ENCODE measurements at regions of chr11 and their contacts with region 1.

Region 1: GRCh38 chr11:119067371-119068222 is at the start of gene VPS11:
- DNase-seq: peak; percentile 94
- ATAC-seq: peak; percentile 97
- H3K4me3 Mint-ChIP-seq: peak within 1 kb of the TSS; percentile 98
- H3K27ac Mint-ChIP-seq: peak within 1 kb of the TSS; percentile 98
- H3K4me1 Mint-ChIP-seq: peaks cover 34% of the 10 kb centered on the region
- H3K27me3 Mint-ChIP-seq: no peaks in the 10 kb centered on the region
- CTCF ChIP-seq: no peak
- total RNA-seq, gene VPS11: 49.6 and 53.6 TPM in 2 replicates

Region 2: DNA sequence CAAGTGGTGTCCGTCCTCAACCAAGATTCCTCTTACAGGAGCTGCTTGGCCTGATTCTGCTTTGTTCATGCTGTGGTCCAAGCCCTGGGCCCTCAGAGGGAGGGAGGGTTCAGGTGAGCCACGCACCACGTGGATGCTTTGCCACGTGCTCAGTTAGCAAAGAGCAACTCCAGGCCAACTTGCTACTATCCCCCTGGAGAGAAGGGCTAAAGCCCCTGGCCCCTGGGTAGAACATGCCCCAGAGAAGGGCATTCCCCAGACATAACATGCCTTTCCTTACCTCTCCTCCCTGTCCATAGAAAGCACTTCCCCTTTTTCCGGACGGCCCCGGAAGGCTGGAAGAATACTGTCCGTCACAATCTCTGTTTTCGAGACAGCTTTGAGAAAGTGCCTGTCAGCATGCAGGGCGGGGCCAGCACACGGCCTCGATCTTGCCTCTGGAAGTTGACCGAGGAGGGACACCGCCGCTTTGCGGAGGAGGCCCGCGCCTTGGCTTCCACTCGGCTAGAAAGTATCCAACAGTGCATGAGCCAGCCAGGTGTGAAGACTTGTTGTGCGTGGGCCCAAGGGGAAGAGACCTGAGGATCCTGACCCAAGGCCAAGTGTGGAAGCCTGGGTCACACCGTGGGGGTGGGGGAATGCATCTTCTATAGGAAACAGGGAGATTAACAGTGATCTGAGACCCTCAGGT is 87.3 kb before region 1 on chr11:
- CTCF ChIA-PET with region 1: no interaction called
- POLR2A ChIA-PET with region 1: no interaction called
- intact Hi-C with region 1: no loop called
- DNase-seq: no peak
- ATAC-seq: no peak
- H3K4me3 Mint-ChIP-seq: no peak overlapping the region
- H3K27ac Mint-ChIP-seq: no peak overlapping the region
- H3K4me1 Mint-ChIP-seq: no peaks in the 10 kb centered on the region
- H3K27me3 Mint-ChIP-seq: peaks cover 15% of the 10 kb centered on the region
- CTCF ChIP-seq: no peak

Region 3: GRCh38 chr11:118997627-118998387 is 69.8 kb before region 1 on chr11 and contains the start of gene CENATAC:
- CTCF ChIA-PET with region 1: no interaction called
- POLR2A ChIA-PET with region 1: interaction called, 17 read pairs
- intact Hi-C with region 1: no loop called
- DNase-seq: peak; percentile 91
- ATAC-seq: peak; percentile 95
- H3K4me3 Mint-ChIP-seq: peak within 1 kb of the TSS; percentile 95
- H3K27ac Mint-ChIP-seq: peak within 1 kb of the TSS; percentile 91
- H3K4me1 Mint-ChIP-seq: peaks cover 32% of the 10 kb centered on the region
- H3K27me3 Mint-ChIP-seq: no peaks in the 10 kb centered on the region
- CTCF ChIP-seq: no peak
- total RNA-seq, gene CENATAC: 66.4 and 85.7 TPM in 2 replicates

Region 4: GRCh38 chr11:119030329-119031049 is 37.1 kb before region 1 on chr11 and contains the start of gene SLC37A4:
- CTCF ChIA-PET with region 1: interaction called, 3 read pairs
- POLR2A ChIA-PET with region 1: interaction called, 5 read pairs
- intact Hi-C with region 1: loop called (anchors 1 kb)
- DNase-seq: peak; percentile 99
- ATAC-seq: peak; percentile 95
- H3K4me3 Mint-ChIP-seq: peak within 1 kb of the TSS; percentile 85
- H3K27ac Mint-ChIP-seq: peak within 1 kb of the TSS; percentile 61
- H3K4me1 Mint-ChIP-seq: peaks cover 15% of the 10 kb centered on the region
- H3K27me3 Mint-ChIP-seq: no peaks in the 10 kb centered on the region
- CTCF ChIP-seq: no peak
- total RNA-seq, gene SLC37A4: 12.0 and 12.1 TPM in 2 replicates

Region 5: GRCh38 chr11:119057000-119057769 is 10.4 kb before region 1 on chr11 and contains the start of gene HYOU1:
- CTCF ChIA-PET with region 1: interaction called, 9 read pairs
- POLR2A ChIA-PET with region 1: interaction called, 62 read pairs
- intact Hi-C with region 1: loop called (anchors 1 kb)
- DNase-seq: peak; percentile 97
- ATAC-seq: peak; percentile 94
- H3K4me3 Mint-ChIP-seq: peak within 1 kb of the TSS; percentile 96
- H3K27ac Mint-ChIP-seq: peak within 1 kb of the TSS; percentile 95
- H3K4me1 Mint-ChIP-seq: peaks cover 40% of the 10 kb centered on the region
- H3K27me3 Mint-ChIP-seq: no peaks in the 10 kb centered on the region
- CTCF ChIP-seq: no peak
- total RNA-seq, gene HYOU1: 120 and 122 TPM in 2 replicates

Region 6: DNA sequence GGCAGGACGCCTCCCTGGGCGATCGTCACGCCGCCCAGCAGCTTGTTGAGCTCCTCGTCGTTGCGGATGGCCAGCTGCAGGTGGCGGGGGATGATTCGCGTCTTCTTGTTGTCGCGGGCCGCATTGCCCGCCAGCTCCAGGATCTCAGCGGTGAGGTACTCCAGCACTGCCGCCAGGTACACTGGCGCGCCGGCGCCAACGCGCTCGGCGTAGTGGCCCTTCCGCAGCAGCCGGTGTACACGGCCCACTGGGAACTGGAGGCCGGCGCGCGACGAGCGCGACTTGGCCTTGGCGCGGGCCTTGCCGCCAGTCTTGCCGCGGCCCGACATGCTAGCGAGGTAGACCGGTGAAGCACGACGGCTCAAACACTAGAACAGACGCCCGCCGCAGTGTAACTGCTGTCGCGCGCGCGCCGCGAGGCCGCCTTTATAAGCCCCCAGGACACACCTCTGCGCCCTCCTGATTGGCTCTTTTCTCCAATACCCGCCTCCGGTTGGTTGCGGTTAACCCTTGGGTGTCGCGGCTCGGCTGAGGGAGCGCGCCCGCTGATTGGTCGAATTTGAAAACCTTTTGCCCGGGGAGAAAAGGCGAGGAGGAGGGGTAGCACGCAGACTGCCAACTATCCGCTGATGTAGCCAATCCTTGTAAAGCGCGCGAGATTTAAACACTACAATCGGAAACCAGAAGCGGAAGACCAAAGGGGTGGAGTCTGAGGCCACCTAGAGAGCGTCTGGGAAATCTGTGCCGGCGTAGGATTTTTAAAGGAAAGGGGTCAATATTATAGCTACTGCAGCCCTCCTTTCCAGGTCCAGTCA is 27.7 kb after region 1 on chr11:
- CTCF ChIA-PET with region 1: interaction called, 5 read pairs
- POLR2A ChIA-PET with region 1: interaction called, 59 read pairs
- intact Hi-C with region 1: loop called (anchors 1 kb)
- DNase-seq: peak; percentile 96
- ATAC-seq: peak; percentile 87
- H3K4me3 Mint-ChIP-seq: peak overlapping the region; percentile 92
- H3K27ac Mint-ChIP-seq: peak overlapping the region; percentile 89
- H3K4me1 Mint-ChIP-seq: peaks cover 50% of the 10 kb centered on the region
- H3K27me3 Mint-ChIP-seq: no peaks in the 10 kb centered on the region
- CTCF ChIP-seq: no peak

Region 7: DNA sequence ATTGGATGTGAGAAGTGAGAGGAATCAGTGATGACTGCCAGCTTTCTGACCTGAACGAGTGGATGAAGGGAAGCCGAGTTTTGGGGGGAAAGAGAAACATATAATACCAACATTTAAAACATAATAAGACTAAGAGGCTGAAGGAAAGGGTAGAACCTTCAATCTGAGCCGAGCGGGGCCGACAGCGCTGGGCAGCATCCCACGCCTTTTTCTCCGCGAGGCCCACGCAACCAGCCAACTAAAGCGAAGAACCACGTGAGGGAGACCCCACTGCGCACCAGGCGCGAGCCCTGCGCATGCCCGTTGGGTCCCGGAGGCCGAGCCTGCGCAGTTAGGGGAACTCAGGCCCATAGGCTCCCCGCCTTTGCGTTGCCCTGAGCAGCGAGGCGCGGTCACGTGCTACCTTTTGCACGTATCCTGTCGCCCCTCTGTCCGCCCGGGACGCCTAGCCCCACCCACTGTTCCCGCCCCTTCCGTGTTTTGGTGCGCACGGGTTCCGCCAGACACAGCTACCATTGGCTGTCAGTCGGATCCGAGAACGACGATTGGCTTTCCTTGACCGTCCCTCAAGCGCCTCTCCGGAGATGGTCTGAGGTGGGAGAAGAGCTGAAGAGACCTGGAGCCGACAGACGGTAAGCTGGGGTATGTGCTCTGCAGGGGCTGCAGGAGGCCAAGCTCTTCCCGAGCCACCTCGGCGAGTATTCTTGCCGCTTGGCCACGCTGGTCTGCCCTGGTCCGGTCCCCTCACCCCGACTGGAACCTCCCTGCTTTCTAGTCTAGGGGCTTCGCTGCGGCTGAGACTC is 53.6 kb after region 1 on chr11 and contains the start of gene HINFP:
- CTCF ChIA-PET with region 1: no interaction called
- POLR2A ChIA-PET with region 1: interaction called, 12 read pairs
- intact Hi-C with region 1: loop called (anchors 1 kb)
- DNase-seq: peak; percentile 97
- ATAC-seq: peak; percentile 97
- H3K4me3 Mint-ChIP-seq: peak within 1 kb of the TSS; percentile 94
- H3K27ac Mint-ChIP-seq: peak within 1 kb of the TSS; percentile 92
- H3K4me1 Mint-ChIP-seq: peaks cover 30% of the 10 kb centered on the region
- H3K27me3 Mint-ChIP-seq: no peaks in the 10 kb centered on the region
- CTCF ChIP-seq: no peak
- total RNA-seq, gene HINFP: 47.8 and 62.6 TPM in 2 replicates

Region 8: GRCh38 chr11:119196833-119197483 is 129.4 kb after region 1 on chr11:
- CTCF ChIA-PET with region 1: interaction called, 6 read pairs
- POLR2A ChIA-PET with region 1: interaction called, 3 read pairs
- intact Hi-C with region 1: loop called (anchors 2 kb)
- DNase-seq: no peak
- ATAC-seq: peak; percentile 98
- H3K4me3 Mint-ChIP-seq: no peak overlapping the region
- H3K27ac Mint-ChIP-seq: no peak overlapping the region
- H3K4me1 Mint-ChIP-seq: peaks cover 5% of the 10 kb centered on the region
- H3K27me3 Mint-ChIP-seq: no peaks in the 10 kb centered on the region
- CTCF ChIP-seq: peak; percentile 21